PC-9 (cell line): ENCODE measurements at regions of chr6 and their contacts with region 1.

Region 1: DNA sequence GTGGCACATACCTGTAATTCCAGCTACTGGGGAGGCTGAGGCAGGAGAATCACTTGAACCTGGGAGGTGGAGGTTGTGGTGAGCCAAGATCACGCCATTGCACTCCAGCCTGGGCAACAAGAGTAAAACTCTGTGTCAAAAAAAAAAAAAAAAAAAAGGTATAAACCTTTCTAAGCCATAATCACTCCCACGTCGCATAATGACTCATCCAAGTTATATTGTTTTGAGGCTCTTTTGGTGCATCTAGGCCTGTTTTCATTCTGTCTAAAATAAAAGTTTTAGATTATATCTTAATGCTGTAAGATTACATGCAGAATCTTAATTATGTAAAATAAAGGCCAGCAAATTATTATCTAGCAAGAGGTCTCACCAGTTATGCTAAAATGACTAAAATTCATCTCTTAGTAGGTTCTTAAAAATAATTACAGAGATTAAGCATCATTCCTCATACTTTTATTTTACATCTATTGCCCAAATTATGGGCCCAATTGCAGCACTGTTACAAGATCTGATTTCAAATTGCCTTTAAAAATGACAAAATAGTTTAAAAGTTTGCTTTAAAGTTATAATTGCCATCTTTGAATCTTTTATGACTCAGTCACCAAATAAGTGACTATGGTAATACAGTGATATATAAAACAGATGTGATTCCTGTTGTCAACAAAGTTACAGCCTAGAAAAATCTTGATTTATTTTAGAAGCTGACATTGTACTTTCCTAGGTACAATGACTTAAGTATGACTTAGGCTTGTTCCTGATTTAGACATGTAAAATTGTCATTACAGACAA is 10.4 kb upstream of the SUMO4 start:
- DNase-seq: no peak
- H3K4me3 ChIP-seq: no peak overlapping the region
- H3K27ac ChIP-seq: no peak overlapping the region
- H3K4me1 ChIP-seq: no peaks in the 10 kb centered on the region
- H3K27me3 ChIP-seq: no peaks in the 10 kb centered on the region
- CTCF ChIP-seq: no peak

Region 2: GRCh38 chr6:149324428-149324827 is 65.3 kb before region 1 on chr6:
- CTCF ChIA-PET with region 1: no interaction called
- POLR2A ChIA-PET with region 1: no interaction called
- intact Hi-C with region 1: loop called (anchors 10 kb)
- DNase-seq: no peak
- H3K4me3 ChIP-seq: no peak overlapping the region
- H3K27ac ChIP-seq: no peak overlapping the region
- H3K4me1 ChIP-seq: peaks cover 21% of the 10 kb centered on the region
- H3K27me3 ChIP-seq: no peaks in the 10 kb centered on the region
- CTCF ChIP-seq: no peak

Region 3: DNA sequence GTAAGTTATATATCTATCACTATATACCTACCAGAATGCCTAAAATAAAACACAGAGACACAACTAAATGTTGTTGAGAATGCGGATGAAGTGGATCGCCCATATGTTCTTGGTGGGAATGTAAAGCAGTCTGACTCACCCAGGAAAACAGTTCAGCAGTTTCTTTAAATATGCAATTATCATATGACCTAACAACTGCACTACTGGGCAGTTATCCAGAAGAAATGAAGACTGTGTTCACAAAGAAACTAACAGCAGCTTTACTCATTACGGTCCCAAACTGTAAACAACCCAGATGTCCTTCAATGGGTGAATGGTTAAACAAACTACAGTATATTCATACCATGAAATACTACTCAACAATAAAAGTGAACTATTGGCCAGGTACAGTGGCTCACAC is 109.4 kb after region 1 on chr6:
- CTCF ChIA-PET with region 1: no interaction called
- POLR2A ChIA-PET with region 1: no interaction called
- intact Hi-C with region 1: no loop called
- DNase-seq: no peak
- H3K4me3 ChIP-seq: no peak overlapping the region
- H3K27ac ChIP-seq: no peak overlapping the region
- H3K4me1 ChIP-seq: no peaks in the 10 kb centered on the region
- H3K27me3 ChIP-seq: no peaks in the 10 kb centered on the region
- CTCF ChIP-seq: no peak